BJ (cell line): ENCODE measurements at regions of chr10 and their contacts with region 1.

Region 1: DNA sequence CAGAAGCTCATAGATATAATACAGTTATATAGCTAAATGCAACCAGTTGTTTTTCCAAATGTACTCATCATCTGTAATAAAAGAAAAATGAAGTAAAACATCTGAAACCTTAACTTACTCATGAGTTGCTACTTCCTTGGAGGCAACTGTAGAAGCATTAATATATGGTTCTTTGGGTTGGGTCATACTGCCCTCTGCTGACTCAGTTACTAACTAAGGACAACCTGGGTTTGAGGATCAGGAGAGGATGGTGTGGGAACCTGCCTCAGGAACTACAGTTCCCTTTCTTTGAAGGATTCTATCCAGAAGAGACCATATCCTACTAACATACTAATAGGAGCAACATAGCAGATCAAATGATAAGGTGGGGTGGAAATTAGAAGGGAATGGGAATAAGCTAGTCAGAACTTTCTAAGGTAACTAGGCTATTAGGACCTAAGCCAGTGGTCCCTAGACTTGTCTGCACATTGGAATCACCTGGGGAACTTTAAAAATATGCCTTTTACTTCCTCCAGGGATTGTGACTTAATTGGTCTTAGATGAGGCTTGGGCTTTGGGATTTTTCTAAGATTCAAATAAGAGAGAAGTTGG is 20.7 kb downstream of the COX15 start:
- DNase-seq: no peak
- H3K4me3 ChIP-seq: no peak overlapping the region
- H3K27me3 ChIP-seq: no peaks in the 10 kb centered on the region
- CTCF ChIP-seq: peak; percentile 64

Region 2: GRCh38 chr10:99520040-99520846 is 191.0 kb before region 1 on chr10:
- CTCF ChIA-PET with region 1: no interaction called
- POLR2A ChIA-PET with region 1: no interaction called
- DNase-seq: no peak
- H3K4me3 ChIP-seq: no peak overlapping the region
- H3K27me3 ChIP-seq: peaks cover 55% of the 10 kb centered on the region
- CTCF ChIP-seq: no peak

Region 3: GRCh38 chr10:99532687-99533495 is 178.3 kb before region 1 on chr10 and contains the start of gene NKX2-3:
- CTCF ChIA-PET with region 1: no interaction called
- POLR2A ChIA-PET with region 1: no interaction called
- DNase-seq: no peak
- H3K4me3 ChIP-seq: no peak within 1 kb of the TSS
- H3K27me3 ChIP-seq: peaks cover 84% of the 10 kb centered on the region
- CTCF ChIP-seq: no peak
- polyA plus RNA-seq, gene NKX2-3: not detected in 2 replicates

Region 4: DNA sequence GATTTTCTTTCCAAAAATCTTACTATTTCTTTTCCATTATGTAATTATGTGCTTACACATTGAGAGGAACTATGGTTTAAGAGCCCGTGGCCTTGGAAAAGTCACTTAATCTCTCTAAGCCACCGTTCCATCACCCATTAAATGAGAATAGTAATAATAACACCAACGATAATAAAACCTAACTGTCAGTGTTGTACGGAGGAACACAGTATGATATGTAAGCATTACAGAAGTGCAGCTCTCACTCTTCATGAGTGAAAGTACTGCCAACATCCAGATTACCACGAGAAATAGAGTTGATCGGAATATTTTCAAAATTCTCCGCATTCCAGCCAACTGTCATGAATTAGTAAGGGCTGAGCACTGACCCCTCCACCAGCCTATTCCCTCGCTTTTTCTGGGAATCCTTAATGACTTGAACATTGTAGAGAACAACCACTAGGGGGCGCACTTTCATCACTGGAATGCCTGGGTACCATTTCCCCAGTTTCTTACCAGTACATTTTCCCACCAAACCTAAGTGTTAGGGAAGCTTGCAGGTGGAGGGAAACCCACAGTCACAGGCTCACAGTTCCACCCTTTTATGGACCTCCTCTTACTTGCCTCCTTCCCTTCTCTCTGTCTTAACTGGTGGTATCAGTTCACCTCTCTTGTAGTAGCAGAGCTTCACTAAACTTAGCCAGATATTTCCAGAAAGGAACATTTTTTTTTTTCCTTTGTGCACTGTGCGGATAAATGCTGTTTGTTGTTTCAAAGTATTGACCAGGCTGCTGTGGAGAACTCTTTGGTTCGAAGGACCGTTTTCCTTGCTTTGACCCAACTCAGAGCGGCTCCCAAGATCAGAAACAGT is 150.7 kb before region 1 on chr10:
- CTCF ChIA-PET with region 1: interaction called, 26 read pairs
- POLR2A ChIA-PET with region 1: no interaction called
- DNase-seq: no peak
- H3K4me3 ChIP-seq: no peak overlapping the region
- H3K27me3 ChIP-seq: peaks cover 13% of the 10 kb centered on the region
- CTCF ChIP-seq: peak; percentile 73

Region 5: GRCh38 chr10:99620713-99621453 is 90.3 kb before region 1 on chr10:
- CTCF ChIA-PET with region 1: interaction called, 133 read pairs
- POLR2A ChIA-PET with region 1: no interaction called
- DNase-seq: peak; percentile 62
- H3K4me3 ChIP-seq: peak overlapping the region; percentile 78
- H3K27me3 ChIP-seq: no peaks in the 10 kb centered on the region
- CTCF ChIP-seq: no peak

Region 6: DNA sequence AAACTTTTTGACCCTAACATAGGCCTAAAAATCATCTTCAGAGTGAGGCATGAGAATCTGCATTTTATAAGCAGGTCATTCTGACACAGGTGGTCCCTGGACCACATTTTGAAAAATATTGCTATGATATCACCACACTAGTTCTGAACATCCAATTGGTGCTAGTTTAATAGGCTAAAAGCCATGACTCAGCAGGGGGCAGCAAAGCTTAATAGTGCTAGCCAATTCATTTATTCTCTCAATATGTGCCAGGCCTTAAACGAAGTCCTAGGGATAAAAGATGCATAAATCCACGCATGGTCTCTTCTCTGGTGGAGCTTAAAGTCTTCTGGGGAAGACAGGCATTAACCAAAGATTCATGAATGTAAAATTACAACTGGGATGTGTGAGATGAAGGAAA is 80.8 kb before region 1 on chr10:
- CTCF ChIA-PET with region 1: interaction called, 133 read pairs
- POLR2A ChIA-PET with region 1: no interaction called
- DNase-seq: no peak
- H3K4me3 ChIP-seq: no peak overlapping the region
- H3K27me3 ChIP-seq: peaks cover 2% of the 10 kb centered on the region; the same call in 1 of the 2 replicates
- CTCF ChIP-seq: peak; percentile 63

Region 7: DNA sequence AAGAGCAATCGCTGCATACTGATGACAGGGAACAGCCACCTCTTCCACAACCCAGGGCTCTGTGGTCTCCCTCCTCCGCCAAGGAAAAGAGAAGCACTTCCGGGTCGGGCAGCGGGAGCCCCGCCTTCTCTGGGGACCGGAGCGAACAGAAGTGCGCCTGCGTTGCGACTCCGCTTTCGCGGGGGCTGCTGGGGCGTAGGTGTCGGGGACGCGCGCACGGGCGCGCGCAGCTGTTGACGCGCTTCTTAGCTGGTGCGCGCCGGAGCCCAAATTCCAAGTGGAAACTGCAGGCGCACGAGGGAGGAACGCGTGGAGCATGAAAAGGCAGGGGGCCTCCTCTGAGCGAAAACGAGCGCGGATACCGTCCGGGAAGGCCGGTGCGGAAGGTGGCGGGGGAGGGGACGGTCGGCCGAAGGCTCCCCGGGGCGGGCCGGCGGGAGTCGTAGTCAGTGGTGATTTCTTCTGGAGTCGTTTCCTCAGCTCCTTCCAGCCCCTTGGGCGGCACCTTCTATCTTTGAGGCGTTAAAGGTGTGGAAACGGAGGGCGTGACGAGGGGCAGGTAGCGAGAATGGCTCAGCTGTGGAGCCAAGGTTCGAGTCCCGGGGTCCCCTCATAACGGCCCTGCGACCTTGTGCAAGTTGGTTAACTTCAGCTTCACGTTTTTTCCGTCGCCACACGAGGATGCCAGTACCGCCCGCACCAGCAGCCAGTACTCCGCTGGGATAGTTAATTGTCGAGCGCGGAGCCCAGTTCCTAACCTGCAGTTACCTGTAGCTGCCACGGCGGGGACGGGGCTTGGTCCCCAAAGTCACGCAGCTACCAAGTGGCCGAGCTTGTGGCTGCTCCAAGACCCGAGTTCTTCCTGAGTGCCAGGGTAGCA is 21.0 kb after region 1 on chr10 and contains the starts of genes COX15 and CUTC:
- CTCF ChIA-PET with region 1: interaction called, 10 read pairs
- POLR2A ChIA-PET with region 1: no interaction called
- DNase-seq: peak; percentile 80
- H3K4me3 ChIP-seq: peak within 1 kb of the TSS; percentile 88
- H3K27me3 ChIP-seq: no peaks in the 10 kb centered on the region
- CTCF ChIP-seq: peak; percentile 45
- polyA plus RNA-seq, gene COX15: 16.3 and 19.3 TPM in 2 replicates
- polyA plus RNA-seq, gene CUTC: 10.7 and 19.3 TPM in 2 replicates